ENCODE measurements at regions of chr4 and their contacts with region 1.

Region 1: DNA sequence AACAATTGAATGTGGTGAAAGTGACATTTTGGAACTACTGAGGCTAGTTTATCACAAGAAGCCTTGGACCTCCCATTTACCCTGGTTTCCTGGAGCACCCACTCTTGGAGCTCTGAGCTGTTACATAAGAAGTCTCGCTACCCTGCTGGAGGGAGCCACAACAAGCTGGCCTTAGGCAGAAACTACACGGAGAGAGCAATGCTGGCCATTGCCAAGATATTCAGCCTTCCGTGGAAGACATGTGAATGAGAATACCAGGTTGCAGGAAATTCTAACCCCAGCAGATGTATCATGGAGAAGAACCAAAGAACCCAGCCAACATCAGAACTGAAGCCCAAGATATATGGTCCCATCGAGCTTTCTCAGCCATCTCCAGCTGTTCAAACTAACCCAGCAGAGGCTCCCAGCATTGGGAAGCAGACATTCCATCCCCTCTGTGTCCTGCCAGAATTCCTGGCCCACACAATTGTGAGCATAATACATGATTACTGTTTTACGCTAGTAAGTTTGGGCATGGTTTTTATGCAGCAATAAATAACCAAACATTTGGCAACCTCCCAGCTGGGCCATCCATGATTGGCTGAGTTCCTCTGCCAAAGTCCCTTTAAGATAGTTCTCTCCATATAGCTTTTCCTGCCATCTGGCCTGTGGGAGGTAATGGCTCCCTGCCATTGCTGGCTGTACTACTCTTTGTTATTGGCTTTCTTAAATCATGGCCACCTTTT is 17.9 kb upstream of the PDE5A start:
- DNase-seq: no peak

Region 2: DNA sequence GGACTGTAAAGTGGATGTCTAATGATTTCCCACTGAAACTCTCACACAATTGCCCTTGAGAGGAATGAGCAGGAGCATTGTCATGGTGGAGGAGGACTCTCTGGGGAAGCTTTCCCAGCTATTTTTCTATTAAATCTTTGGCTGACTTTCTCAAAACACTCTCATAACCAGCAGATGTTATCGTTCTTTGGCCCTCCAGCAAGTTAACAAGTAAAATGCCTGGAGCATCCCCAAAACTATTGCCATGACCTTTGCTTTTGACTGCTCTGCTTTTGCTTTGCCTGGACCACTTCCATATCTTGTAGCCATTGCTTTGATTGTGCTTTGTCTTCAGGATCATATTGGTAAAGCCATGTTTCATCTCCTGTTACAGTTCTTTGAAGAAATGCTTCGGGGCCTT is 102.3 kb after region 1 on chr4:
- intact Hi-C with region 1: loop called (anchors 5 kb)
- DNase-seq: no peak

Region 3: GRCh38 chr4:119774840-119775239 is 128.3 kb after region 1 on chr4:
- intact Hi-C with region 1: no loop called
- DNase-seq: no peak

Region 4: GRCh38 chr4:119939071-119939995 is 292.8 kb after region 1 on chr4:
- intact Hi-C with region 1: loop called (anchors 10 kb)
- DNase-seq: no peak